A549 (cell line): ENCODE measurements at regions of chr1 and their contacts with region 1.

Region 1: GRCh38 chr1:150696590-150697524 is at the start of gene GOLPH3L:
- DNase-seq: peak; percentile 92 to 98
- ATAC-seq: peak; percentile 100
- H3K4me3 ChIP-seq: peak within 1 kb of the TSS; percentile 66
- H3K27ac ChIP-seq: peak within 1 kb of the TSS; percentile 75 to 88
- H3K4me1 ChIP-seq: peaks cover 13% of the 10 kb centered on the region; the same call in 2 of the 3 replicates
- CTCF ChIP-seq: no peak
- EP300 ChIP-seq: no peak
- POLR2A ChIP-seq: 0 out of 2 replicates have a peak, but pooled peaks have one; percentile 40
- RAD21 ChIP-seq: no peak
- polyA plus RNA-seq, gene GOLPH3L: 34.9 and 41.8 TPM in 2 replicates

Region 2: DNA sequence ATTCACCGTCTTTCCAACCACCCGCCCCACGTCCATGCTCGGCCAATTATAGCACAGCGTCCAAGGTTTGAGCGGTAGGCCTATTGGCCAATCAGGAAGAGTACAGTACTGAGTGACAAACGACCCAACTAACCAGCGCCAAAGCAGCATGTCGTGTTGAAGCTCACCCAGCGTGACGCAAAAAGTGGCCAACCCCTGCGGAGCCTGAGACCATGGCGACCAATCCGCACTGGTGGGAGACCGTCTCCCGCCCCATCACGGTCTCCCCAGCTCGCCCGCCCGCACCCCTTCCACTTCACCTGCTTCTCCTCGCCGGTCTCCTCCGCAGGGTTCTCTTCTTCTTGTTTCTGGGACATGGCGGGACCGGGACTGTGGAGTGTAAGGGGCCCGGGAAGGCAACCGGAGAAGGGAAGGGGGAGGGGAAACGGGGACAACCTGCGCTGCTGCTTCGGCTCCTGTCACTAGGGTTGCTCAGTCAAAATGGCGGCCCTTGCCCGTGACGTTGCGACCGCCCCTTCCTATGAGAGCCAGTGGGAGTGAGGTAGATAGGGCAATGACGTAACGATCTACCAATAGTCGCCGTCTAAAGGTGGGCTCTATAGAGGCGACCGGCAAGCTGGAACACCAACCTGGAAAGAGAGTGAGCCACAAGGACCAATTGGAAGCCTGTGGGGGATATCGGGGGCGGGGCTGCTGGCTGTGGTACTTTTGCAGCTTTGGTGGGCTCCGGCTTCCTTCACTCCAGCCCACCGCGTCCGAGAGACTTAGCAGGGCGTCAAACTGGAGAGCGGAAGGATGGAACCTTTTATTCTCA is 67.5 kb before region 1 on chr1 and contains the start of gene ENSA:
- CTCF ChIA-PET with region 1: no interaction called
- POLR2A ChIA-PET with region 1: interaction called, 19 read pairs
- DNase-seq: peak; percentile 99
- ATAC-seq: peak; percentile 96 to 97
- H3K4me3 ChIP-seq: peak within 1 kb of the TSS; percentile 62
- H3K27ac ChIP-seq: peak within 1 kb of the TSS; percentile 85 to 95
- H3K4me1 ChIP-seq: peaks cover 13% of the 10 kb centered on the region; the same call in 2 of the 3 replicates
- CTCF ChIP-seq: no peak
- EP300 ChIP-seq: no peak
- POLR2A ChIP-seq: peak; percentile 58
- RAD21 ChIP-seq: no peak
- polyA plus RNA-seq, gene ENSA: 61.2 and 67.9 TPM in 2 replicates

Region 3: DNA sequence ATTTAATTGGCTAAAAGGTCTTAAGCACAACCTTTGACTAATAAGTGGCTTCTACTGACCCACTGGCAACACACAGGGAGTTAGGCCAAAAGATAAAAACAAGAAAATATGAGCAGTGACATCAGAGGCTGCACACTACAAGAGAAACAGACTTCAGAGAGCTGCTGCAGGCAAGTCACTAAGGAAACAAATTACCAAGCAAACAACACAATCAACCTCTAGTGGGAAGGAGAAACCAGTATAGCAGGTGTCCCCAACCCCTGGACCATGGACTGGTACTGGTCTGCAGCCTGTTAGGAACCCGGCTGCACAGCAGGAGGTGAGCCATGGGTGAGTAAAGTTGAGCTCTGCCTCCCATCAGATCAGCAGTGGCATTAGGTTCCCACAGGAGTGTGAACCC is 46.7 kb before region 1 on chr1:
- CTCF ChIA-PET with region 1: no interaction called
- POLR2A ChIA-PET with region 1: no interaction called
- DNase-seq: no peak
- ATAC-seq: no peak
- H3K4me3 ChIP-seq: no peak overlapping the region
- H3K27ac ChIP-seq: no peak overlapping the region
- H3K4me1 ChIP-seq: peaks cover 4% of the 10 kb centered on the region; the same call in 1 of the 3 replicates
- CTCF ChIP-seq: no peak
- EP300 ChIP-seq: no peak
- POLR2A ChIP-seq: no peak
- RAD21 ChIP-seq: no peak

Region 4: DNA sequence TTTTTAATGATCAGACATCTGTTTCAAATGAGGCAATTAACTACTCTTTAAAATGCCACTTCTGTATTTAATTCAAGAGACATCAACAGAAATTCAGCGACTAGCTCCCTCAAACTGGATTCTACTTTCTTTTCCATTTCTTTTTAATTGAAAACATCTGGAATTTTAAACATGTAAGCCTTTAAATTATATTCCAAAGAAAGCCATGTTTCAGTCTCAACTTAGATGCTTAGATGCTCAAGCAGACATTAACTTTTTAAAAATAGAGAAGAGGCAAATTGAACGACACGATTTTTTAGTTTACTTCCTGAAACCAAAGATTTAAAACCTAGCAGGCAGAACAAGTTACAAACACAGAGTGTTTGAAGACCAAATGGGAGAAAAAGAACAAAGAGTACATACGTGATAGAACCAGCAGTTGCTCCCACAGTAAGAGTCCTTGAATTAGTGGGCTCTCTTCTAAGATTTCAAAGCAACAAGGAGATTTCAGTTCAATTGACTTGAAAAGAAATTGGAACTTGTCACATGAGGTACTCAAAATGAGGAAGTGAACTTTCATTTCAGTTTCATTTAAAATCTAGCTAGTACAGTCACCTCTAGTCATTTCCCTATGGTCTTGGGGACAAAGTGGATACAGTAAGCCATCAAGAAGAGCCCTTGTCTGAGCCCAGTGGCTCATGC is 68.6 kb after region 1 on chr1 and contains the start of gene CTSS:
- CTCF ChIA-PET with region 1: no interaction called
- POLR2A ChIA-PET with region 1: no interaction called
- DNase-seq: peak in 1 of 2 experiments; percentile 20
- ATAC-seq: peak; percentile 47 to 58; a peak in 3 of 6 replicates
- H3K4me3 ChIP-seq: peak within 1 kb of the TSS; percentile 33
- H3K27ac ChIP-seq: peak within 1 kb of the TSS; percentile 71 to 79
- H3K4me1 ChIP-seq: peaks cover 20% of the 10 kb centered on the region
- CTCF ChIP-seq: no peak
- EP300 ChIP-seq: no peak
- POLR2A ChIP-seq: no peak
- RAD21 ChIP-seq: no peak
- polyA plus RNA-seq, gene CTSS: 29.6 and 33.9 TPM in 2 replicates